Activated CD8-positive, alpha-beta T cell treated with anti-CD3 and anti-CD28 coated beads, Interleukin-2, amount 10 ng/mL, durations not matched to agents 7 days and 5 days (primary cell): ENCODE measurements at regions of chr21 and their contacts with region 1.

Region 1: DNA sequence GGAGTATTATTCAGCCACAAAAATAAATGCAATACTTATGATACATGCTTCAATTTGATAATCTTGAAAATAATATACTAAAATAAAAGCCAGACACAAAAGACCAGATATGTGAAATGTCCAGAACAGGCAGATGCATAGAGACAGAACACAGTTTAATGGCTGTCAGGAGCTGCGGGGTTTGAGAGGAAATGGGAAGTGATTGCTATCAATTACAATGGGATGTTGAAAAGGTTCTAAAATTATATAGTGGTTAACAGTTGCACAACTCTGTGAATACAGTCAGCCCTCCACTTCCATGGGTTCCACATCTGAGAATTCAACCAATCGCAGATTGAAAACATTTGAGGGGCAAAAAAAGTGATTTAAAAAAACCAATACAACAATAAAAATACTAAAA is 54.0 kb downstream of the LTN1 start:
- DNase-seq: no peak
- ATAC-seq: no peak
- H3K4me3 Mint-ChIP-seq: no peak overlapping the region
- H3K27ac Mint-ChIP-seq: no peak overlapping the region
- H3K4me1 Mint-ChIP-seq: peaks cover 4% of the 10 kb centered on the region
- H3K27me3 Mint-ChIP-seq: no peaks in the 10 kb centered on the region

Region 2: DNA sequence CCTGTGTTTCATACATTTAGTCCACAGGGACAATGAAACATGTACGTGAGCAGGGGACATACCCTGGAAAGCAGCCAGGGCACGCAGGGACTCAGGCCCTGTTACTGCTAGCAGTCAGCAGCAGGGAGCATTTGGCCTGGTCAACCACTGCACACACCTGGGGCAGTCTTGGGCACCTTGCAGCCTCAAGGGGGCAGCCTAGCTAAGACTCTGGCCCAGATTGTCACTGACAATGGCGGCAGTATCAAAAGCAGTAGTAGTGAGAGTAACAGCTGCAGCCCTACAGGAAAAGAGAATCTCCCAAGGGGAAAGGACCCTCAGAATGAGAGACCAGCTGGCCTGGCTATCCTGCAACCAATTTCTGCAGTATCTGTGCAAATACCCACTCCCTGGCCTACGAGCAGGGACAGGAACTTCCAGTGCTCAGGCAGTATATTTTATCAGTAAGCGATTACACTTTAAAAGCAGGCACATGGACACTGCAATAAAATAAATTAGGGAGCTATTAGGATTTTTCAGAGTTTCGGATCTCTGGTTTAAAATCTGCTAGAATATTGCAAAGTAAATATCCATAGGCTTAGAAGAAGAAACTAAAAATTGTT is 421.6 kb before region 1 on chr21:
- CTCF ChIA-PET with region 1: interaction called, 18 read pairs
- POLR2A ChIA-PET with region 1: no interaction called
- DNase-seq: peak; percentile 74
- ATAC-seq: peak; percentile 96
- H3K4me3 Mint-ChIP-seq: no peak overlapping the region
- H3K27ac Mint-ChIP-seq: no peak overlapping the region
- H3K4me1 Mint-ChIP-seq: no peaks in the 10 kb centered on the region
- H3K27me3 Mint-ChIP-seq: peaks cover 5% of the 10 kb centered on the region